Ascending aorta (tissue), 2 donors: ENCODE measurements at regions of chr6 and their contacts with region 1.

Region 1: DNA sequence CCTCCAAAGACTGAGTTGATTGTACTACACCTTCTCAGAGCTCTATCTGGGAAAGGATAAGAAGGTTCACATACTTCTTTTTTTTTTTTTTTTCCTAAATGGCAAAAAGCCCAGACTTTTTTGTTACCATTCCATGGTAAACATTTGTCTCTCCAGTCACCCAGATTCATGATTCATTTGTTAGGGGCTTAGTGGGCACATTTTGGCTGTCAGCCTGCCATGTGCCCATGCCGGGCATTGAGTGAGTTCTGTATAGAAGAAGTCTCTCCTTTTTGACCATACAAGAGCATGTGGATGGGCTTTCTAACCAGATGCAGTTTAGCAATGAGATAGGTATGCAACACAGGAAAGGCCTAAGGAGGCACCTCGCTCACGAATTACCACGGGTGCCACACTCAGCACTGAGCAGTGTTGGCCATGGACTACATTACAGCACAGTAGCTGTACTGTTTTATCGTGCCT is 447.5 kb upstream of the HSF2 start:
- DNase-seq: peak; percentile 48 to 89
- H3K4me3 ChIP-seq: no peak overlapping the region
- H3K27ac ChIP-seq: peak overlapping the region; percentile 60 to 81
- H3K4me1 ChIP-seq: peaks cover 0 to 11% of the 10 kb centered on the region in 2 donors
- H3K27me3 ChIP-seq: no peaks in the 10 kb centered on the region
- CTCF ChIP-seq: no peak

Region 2: DNA sequence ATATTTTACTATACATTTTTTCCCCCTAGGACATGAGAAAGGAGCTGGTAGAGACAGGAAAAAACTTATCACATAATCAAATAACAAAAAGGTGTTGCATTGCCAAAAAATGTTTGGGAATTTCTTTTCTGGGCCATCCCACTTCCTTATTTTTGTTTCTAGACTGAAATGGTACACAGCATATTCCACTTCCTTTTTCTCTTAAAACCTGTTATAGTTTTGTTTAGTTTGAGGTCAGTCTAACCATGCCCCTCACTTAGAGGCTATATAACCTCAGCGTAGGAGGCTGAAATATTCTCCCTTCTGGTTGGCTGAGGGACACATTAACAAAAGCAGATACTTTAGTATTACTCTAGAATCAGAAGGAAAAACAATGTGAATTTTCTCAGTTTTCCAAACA is 192.6 kb before region 1 on chr6:
- intact Hi-C with region 1: no loop called
- DNase-seq: no peak
- H3K4me3 ChIP-seq: no peak overlapping the region
- H3K27ac ChIP-seq: no peak overlapping the region
- H3K4me1 ChIP-seq: peaks cover 0 to 3% of the 10 kb centered on the region in 2 donors
- H3K27me3 ChIP-seq: no peaks in the 10 kb centered on the region
- CTCF ChIP-seq: no peak

Region 3: DNA sequence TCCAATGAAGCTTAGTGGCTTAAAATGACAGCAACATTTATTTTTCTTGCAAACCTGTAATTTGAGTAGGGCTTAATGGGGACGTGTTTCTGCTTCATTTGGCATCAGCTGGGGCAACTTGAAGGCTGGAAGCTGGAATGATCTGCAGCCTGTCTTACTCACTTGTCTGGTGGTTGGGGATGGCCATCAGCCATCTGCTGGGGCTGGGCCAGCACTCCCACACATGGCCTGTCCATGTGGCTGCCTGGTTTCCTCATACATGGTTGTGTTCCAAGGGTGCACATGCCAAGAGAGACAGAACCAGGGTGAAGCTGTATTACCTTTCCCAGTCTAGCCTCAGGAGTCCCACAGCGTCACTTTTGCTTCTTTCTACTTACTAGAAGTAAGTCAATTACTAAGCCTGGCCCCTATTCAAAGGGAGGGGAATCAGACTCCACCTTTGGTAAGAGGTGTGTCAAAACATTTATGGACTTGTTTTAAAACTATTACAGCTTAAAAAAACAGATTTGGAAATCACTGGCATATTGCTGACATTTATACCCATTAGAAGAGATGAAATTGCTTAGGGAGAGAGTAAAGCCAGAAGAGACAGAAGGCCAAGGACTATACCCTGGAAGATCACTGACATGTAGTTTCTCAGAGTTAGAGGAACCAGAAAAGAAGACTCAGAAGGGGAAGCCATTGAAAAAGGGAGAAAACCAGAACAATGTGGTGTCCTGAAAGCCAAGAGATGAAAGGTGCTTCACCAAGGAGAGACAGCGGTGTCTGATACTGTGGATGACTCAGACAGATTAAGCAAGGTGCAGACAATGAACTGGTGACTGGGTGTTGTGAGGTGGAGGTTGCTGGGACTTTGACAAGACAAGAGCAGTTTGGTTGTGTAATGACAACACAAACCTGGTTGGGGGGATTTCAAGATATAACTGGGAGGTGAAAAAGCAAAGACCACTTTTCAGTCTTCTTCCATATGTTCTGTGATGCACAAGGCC is 171.3 kb before region 1 on chr6:
- intact Hi-C with region 1: loop called (anchors 5 kb)
- DNase-seq: peak; percentile 50 to 94
- H3K4me3 ChIP-seq: no peak overlapping the region
- H3K27ac ChIP-seq: peak overlapping the region; percentile 73 to 75
- H3K4me1 ChIP-seq: peaks cover 0 to 19% of the 10 kb centered on the region in 2 donors
- H3K27me3 ChIP-seq: no peaks in the 10 kb centered on the region
- CTCF ChIP-seq: no peak